CD4-positive, alpha-beta T cell (primary cell): ENCODE measurements at regions of chr15 and their contacts with region 1.

Region 1: DNA sequence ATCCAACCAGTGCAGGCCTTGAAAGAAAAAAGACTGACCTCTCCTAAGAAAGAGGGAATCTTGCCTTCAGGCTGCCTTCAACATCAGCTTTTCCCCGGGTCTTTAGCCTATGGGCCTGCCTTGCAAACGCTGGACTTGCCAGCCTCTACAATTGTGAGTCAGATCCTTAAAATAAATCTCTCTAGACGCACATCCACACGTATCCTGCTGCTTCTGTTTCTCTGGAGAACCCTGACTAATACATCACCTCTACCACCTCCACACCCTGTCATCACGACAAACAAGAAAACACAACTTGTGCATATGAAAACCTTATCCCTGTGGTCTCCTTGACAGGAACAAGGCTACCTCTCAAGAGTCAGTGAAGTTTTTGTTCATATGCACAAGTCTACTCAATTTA is 11.8 kb downstream of the CYFIP1 start:
- DNase-seq: no peak
- ATAC-seq: no peak
- H3K4me3 ChIP-seq: no peak overlapping the region
- H3K4me3 Mint-ChIP-seq: no peak overlapping the region
- H3K27ac ChIP-seq: no peak overlapping the region
- H3K27ac Mint-ChIP-seq: no peak overlapping the region
- H3K4me1 ChIP-seq: no peaks in the 10 kb centered on the region
- H3K4me1 Mint-ChIP-seq: no peaks in the 10 kb centered on the region
- H3K27me3 ChIP-seq: no peaks in the 10 kb centered on the region
- H3K27me3 Mint-ChIP-seq: no peaks in the 10 kb centered on the region
- CTCF ChIP-seq: no peak

Region 2: GRCh38 chr15:22827125-22827524 is 141.2 kb before region 1 on chr15:
- CTCF ChIA-PET with region 1: no interaction called
- POLR2A ChIA-PET with region 1: no interaction called
- intact Hi-C with region 1: loop called in 1 of 2 experiments (anchors 10 kb)
- DNase-seq: no peak
- ATAC-seq: no peak
- H3K4me3 ChIP-seq: no peak overlapping the region
- H3K4me3 Mint-ChIP-seq: no peak overlapping the region
- H3K27ac ChIP-seq: no peak overlapping the region
- H3K27ac Mint-ChIP-seq: no peak overlapping the region
- H3K4me1 ChIP-seq: no peaks in the 10 kb centered on the region
- H3K4me1 Mint-ChIP-seq: no peaks in the 10 kb centered on the region
- H3K27me3 ChIP-seq: no peaks in the 10 kb centered on the region
- H3K27me3 Mint-ChIP-seq: no peaks in the 10 kb centered on the region
- CTCF ChIP-seq: no peak

Region 3: GRCh38 chr15:22922003-22922402 is 46.4 kb before region 1 on chr15:
- CTCF ChIA-PET with region 1: no interaction called
- POLR2A ChIA-PET with region 1: no interaction called
- intact Hi-C with region 1: loop called in 1 of 2 experiments (anchors 5 kb)
- DNase-seq: no peak
- ATAC-seq: no peak
- H3K4me3 ChIP-seq: no peak overlapping the region
- H3K4me3 Mint-ChIP-seq: no peak overlapping the region
- H3K27ac ChIP-seq: no peak overlapping the region
- H3K27ac Mint-ChIP-seq: no peak overlapping the region
- H3K4me1 ChIP-seq: no peaks in the 10 kb centered on the region
- H3K4me1 Mint-ChIP-seq: no peaks in the 10 kb centered on the region
- H3K27me3 ChIP-seq: no peaks in the 10 kb centered on the region
- H3K27me3 Mint-ChIP-seq: no peaks in the 10 kb centered on the region
- CTCF ChIP-seq: no peak